B cell (primary cell): ENCODE measurements at regions of chr14 and their contacts with region 1.

Region 1: DNA sequence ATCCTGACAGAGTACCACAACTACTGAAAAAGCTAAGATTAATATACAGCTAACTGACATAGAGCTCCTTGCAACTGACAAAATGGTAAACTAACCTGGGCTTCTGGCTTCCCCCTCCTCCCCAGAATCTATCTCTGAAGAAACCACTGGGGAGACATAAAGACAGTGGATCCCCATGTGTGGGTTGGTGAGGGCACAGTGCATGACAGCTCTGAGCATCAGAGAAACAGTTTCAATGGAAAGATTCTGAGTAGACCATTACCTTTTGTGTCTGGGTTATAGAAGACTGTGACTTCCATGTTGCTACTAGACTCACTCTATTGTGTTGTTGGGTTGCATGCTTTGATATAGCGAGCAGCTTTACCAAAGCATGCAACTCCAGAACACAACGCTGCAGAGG is 247.4 kb downstream of the EFCAB11 start:
- DNase-seq: no peak
- ATAC-seq: no peak
- H3K4me3 ChIP-seq: no peak overlapping the region
- H3K4me3 Mint-ChIP-seq: no peak overlapping the region
- H3K27ac ChIP-seq: no peak overlapping the region
- H3K27ac Mint-ChIP-seq: no peak overlapping the region
- H3K4me1 ChIP-seq: peaks cover 14% of the 10 kb centered on the region in 2 donors
- H3K4me1 Mint-ChIP-seq: peaks cover 16% of the 10 kb centered on the region
- H3K27me3 ChIP-seq: no peaks in the 10 kb centered on the region
- H3K27me3 Mint-ChIP-seq: no peaks in the 10 kb centered on the region
- CTCF ChIP-seq: no peak

Region 2: DNA sequence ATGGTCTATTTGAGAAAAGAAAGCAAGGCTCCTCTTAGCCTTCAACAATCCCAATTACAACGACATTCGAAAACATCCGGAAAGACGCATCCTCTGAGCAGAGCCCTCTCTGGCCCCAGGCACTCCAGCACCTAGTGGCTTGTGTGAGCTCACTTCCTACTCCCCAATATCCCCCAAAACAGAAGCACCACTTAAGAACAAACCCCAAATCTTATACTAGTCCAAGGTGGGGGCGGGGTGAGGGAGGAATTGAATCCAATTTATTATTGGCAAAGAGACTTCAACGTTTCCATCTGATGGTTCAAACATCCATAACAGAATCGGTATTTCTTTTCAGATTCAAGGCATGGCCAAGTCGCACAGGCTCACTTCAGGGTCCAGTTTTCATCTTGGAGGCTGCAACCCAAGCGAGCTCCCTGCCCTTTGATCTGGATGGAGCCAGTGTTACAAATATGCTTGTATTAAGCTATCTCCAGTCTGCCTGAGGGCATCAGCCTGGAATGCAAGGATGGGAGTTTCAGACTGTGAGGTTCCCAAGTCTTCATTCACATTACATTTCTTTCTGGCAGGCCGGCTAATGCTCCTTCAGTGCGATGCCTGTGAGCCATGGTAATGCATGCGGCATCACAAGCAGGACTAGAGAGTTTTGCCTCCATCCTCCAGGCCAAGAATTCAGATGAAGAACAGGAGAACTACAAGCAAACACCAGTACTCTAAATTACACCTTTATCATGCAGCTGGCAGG is 157.5 kb before region 1 on chr14:
- CTCF ChIA-PET with region 1: no interaction called
- POLR2A ChIA-PET with region 1: interaction called, 13 read pairs
- intact Hi-C with region 1: no loop called
- DNase-seq: no peak
- ATAC-seq: no peak
- H3K4me3 ChIP-seq: no peak overlapping the region
- H3K4me3 Mint-ChIP-seq: no peak overlapping the region
- H3K27ac ChIP-seq: no peak overlapping the region
- H3K27ac Mint-ChIP-seq: no peak overlapping the region
- H3K4me1 ChIP-seq: no peaks in the 10 kb centered on the region
- H3K4me1 Mint-ChIP-seq: peaks cover 11% of the 10 kb centered on the region
- H3K27me3 ChIP-seq: no peaks in the 10 kb centered on the region
- H3K27me3 Mint-ChIP-seq: no peaks in the 10 kb centered on the region
- CTCF ChIP-seq: no peak

Region 3: DNA sequence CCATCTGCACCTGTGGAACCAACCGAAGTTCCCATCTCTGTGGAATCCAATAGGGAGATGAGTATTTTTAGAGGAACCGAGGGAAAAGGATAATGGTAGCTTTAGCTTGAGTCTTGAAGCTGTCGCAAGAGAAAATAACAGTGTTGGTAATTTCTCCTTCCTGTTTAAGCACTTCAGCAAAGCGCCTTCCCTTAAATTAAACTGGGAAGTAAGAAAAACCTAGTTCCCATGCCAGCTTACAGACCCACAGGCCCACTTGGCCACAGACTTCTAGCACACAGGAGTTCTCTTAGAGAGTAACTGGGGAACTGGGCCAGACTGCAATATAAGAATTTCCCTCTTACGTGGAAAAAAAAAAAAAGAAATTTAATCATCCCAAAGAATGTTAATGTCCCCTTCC is 23.6 kb after region 1 on chr14:
- CTCF ChIA-PET with region 1: no interaction called
- POLR2A ChIA-PET with region 1: no interaction called
- intact Hi-C with region 1: no loop called
- DNase-seq: no peak
- ATAC-seq: no peak
- H3K4me3 ChIP-seq: no peak overlapping the region
- H3K4me3 Mint-ChIP-seq: no peak overlapping the region
- H3K27ac ChIP-seq: no peak overlapping the region
- H3K27ac Mint-ChIP-seq: no peak overlapping the region
- H3K4me1 ChIP-seq: no peaks in the 10 kb centered on the region
- H3K4me1 Mint-ChIP-seq: peaks cover 2% of the 10 kb centered on the region
- H3K27me3 ChIP-seq: no peaks in the 10 kb centered on the region
- H3K27me3 Mint-ChIP-seq: no peaks in the 10 kb centered on the region
- CTCF ChIP-seq: no peak